ENCODE measurements at regions of chr6 and their contacts with region 1.

Region 1: GRCh38 chr6:87472525-87473418 is at the start of gene SLC35A1:
- DNase-seq: peak; percentile 49 to 82
- H3K4me3 ChIP-seq: peak within 1 kb of the TSS; percentile 86
- H3K27ac ChIP-seq: 0 out of 2 replicates have a peak within 1 kb of the TSS, but pooled peaks have one; percentile 32
- H3K4me1 ChIP-seq: peaks cover 8% of the 10 kb centered on the region
- H3K27me3 ChIP-seq: no peaks in the 10 kb centered on the region
- CTCF ChIP-seq: peak; percentile 33; the same call in 1 of the 2 replicates
- total RNA-seq, gene SLC35A1: 6.7 and 9.3 TPM in 2 replicates

Region 2: GRCh38 chr6:86969573-86969972 is 503.2 kb before region 1 on chr6:
- CTCF ChIA-PET with region 1: no interaction called
- POLR2A ChIA-PET with region 1: no interaction called
- intact Hi-C with region 1: no loop called
- DNase-seq: peak; percentile 3 to 34
- H3K4me3 ChIP-seq: no peak overlapping the region
- H3K27ac ChIP-seq: no peak overlapping the region
- H3K4me1 ChIP-seq: 0 out of 2 replicates have a peak, but pooled peaks cover 5% of the 10 kb centered on the region
- H3K27me3 ChIP-seq: no peaks in the 10 kb centered on the region
- CTCF ChIP-seq: no peak

Region 3: GRCh38 chr6:87322304-87323212 is 150.2 kb before region 1 on chr6 and contains the start of gene SMIM8:
- CTCF ChIA-PET with region 1: no interaction called
- POLR2A ChIA-PET with region 1: no interaction called
- intact Hi-C with region 1: loop called (anchors 2 kb)
- DNase-seq: peak; percentile 55 to 83
- H3K4me3 ChIP-seq: peak within 1 kb of the TSS; percentile 92
- H3K27ac ChIP-seq: no peak within 1 kb of the TSS
- H3K4me1 ChIP-seq: no peaks in the 10 kb centered on the region
- H3K27me3 ChIP-seq: no peaks in the 10 kb centered on the region
- CTCF ChIP-seq: peak; percentile 84
- total RNA-seq, gene SMIM8: 5.3 and 6.7 TPM in 2 replicates

Region 4: DNA sequence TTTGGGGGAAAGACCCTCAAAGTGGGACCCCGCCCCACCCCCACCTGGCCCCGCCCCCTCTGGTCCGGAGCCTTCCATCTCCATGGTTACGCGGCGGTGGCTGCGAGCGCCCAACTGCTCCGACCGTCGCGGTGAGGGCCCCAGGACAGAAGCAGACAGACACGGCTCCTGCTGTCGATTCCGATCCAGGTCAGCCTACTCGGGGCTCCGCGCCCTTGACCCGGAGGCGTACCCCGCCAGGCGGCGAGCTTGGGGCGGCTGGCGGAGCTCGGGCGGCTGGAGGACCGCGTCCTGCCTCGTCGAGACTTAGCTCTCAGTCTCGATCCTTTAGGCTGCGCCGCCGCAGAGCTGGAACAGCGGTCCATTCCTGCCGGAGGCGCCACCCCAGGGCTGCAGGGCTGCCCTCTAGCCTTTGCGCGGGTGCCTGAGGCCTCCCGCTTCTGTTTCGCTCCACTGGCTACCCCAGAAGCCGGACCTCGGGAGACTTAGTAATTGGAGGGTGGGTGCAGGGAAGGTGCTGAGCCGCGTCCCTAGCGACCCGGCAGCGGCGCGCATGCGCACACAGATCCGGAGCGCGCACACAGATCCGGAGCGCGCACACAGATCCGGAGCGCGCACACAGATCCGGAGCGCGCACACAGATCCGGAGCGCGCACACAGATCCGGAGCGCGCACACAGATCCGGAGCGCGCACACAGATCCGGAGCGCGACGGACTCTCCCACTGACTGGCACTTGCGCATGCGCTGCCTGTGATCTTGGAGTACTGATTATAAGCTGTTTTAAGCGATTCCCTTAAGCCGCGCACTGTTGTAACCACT is 64.7 kb before region 1 on chr6 and contains the start of gene CFAP206:
- CTCF ChIA-PET with region 1: no interaction called
- POLR2A ChIA-PET with region 1: no interaction called
- intact Hi-C with region 1: loop called (anchors 1 kb)
- DNase-seq: peak; percentile 67 to 79
- H3K4me3 ChIP-seq: peak within 1 kb of the TSS; percentile 94
- H3K27ac ChIP-seq: peak within 1 kb of the TSS; percentile 34; the same call in 1 of the 2 replicates
- H3K4me1 ChIP-seq: 0 out of 2 replicates have a peak, but pooled peaks cover 6% of the 10 kb centered on the region
- H3K27me3 ChIP-seq: no peaks in the 10 kb centered on the region
- CTCF ChIP-seq: no peak
- total RNA-seq, gene CFAP206: 2.9 and 3.2 TPM in 2 replicates

Region 5: DNA sequence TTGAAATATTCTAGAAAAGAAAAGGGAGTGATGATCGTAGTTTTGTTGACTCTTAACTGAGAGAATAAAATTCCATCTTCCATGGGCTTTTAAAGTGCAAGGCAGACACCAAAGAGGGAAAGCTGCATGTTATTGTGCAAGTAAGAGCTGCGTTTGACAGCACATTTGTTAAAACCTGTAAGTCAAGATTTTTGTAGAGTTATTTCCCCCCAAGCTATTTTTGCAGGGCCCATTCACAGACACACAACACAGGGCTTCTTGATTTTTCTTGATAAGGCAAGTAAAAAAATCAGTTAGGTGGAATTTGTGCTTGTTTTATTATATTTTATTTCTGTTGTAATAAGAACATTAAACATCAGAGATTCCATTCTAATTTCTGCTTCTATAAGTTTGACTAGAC is 51.2 kb before region 1 on chr6:
- CTCF ChIA-PET with region 1: no interaction called
- POLR2A ChIA-PET with region 1: no interaction called
- intact Hi-C with region 1: loop called (anchors 1 kb)
- DNase-seq: peak; percentile 41 to 92
- H3K4me3 ChIP-seq: peak overlapping the region; percentile 31; the same call in 1 of the 2 replicates
- H3K27ac ChIP-seq: peak overlapping the region; percentile 65
- H3K4me1 ChIP-seq: peaks cover 9% of the 10 kb centered on the region
- H3K27me3 ChIP-seq: no peaks in the 10 kb centered on the region
- CTCF ChIP-seq: no peak

Region 6: DNA sequence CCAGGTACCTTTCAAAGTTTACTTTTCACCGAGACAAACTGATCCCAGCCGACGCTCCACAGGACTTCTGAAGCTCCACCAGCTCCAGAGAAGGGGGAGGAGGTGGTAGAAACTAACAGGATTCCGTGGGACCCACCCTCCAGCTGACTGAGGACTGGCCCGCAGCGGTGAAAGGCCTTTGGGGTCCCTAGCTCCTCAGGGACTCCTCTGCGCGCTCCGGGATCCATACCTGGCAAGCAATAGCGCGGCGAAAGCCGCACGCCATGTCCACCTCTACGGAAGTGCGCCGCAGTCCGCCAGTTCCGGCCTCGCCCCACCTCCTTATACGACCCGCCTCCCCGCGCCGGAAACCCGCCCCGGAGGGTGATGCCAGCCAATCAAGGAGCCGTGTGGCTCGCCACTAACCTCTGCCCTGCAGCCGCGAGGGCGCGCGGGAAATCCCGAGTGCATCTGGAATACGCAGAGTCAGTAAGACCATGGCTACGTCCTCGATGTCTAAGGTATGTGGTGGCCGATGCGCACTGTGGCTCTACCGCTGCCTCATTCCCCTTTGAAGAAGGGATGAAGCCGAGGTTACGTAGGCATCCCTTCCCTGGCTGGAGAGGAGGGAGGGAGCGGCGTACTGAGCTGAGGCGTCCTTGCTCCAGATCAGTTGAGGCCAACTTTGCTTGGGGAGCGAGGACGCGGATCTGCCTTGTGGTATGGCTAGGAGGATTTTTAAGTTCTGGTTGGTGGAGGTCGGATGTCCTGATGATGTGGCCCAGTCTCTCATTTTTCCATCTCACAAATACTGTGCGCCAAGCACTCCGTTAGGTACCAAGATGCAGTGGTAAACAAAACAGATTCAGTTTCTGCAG is 117.1 kb after region 1 on chr6 and contains the starts of genes ORC3 and RARS2:
- CTCF ChIA-PET with region 1: no interaction called
- POLR2A ChIA-PET with region 1: no interaction called
- intact Hi-C with region 1: loop called (anchors 2 kb)
- DNase-seq: peak; percentile 85 to 94
- H3K4me3 ChIP-seq: peak within 1 kb of the TSS; percentile 75
- H3K27ac ChIP-seq: peak within 1 kb of the TSS; percentile 27
- H3K4me1 ChIP-seq: peaks cover 11% of the 10 kb centered on the region
- H3K27me3 ChIP-seq: no peaks in the 10 kb centered on the region
- CTCF ChIP-seq: no peak
- total RNA-seq, gene ORC3: 19.8 and 24.3 TPM in 2 replicates
- total RNA-seq, gene RARS2: 22.6 and 34.6 TPM in 2 replicates

Measured in PC-9 (cell line).